Transverse colon (tissue), 4 donors: ENCODE measurements at regions of chr15 and their contacts with region 1.

Region 1: DNA sequence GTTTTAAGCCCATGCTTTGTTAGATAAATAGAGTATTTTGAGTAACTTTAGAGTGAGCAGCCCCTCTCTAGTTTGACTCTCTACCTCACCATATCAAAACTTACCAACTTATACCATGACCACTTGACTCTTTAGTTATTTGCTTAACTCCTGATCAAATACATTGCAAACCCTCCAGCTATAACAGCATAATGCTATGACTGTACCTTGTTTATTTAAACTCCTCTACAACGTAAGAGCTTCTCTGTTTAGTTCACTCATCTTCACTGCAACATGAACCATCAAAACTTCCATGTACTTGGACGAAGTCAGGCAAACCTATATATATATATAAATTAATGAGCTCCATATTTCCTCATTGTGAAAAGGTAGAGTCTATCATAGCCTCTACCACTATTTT is 218.2 kb downstream of the DPH6 start:
- DNase-seq: no peak
- H3K4me3 ChIP-seq: no peak overlapping the region
- H3K27ac ChIP-seq: no peak overlapping the region
- H3K4me1 ChIP-seq: peaks cover 0 to 17% (median 5%) of the 10 kb centered on the region in 4 donors
- H3K27me3 ChIP-seq: no peaks in the 10 kb centered on the region
- CTCF ChIP-seq: no peak
- EP300 ChIP-seq: no peak
- POLR2A ChIP-seq: no peak

Region 2: DNA sequence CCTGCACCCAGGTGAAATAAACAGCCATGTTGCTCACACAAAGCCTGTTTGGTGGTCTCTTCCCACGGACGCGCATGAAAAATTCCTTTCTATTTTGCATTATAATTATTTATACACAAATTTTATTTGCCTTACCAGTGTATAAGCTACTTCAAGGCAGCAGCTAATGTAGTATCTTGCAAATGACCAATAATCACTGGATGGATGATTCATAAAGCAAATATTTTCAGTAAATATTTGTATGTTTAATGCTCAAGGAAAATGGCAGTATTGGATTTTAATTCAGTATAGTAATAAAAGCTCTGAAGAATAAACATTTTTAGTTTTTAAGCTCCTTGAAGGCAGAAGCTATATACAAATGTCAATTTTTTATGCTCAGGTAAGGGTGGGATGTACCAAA is 84.0 kb before region 1 on chr15:
- in situ Hi-C with region 1: no loop called
- intact Hi-C with region 1: no loop called
- DNase-seq: no peak
- H3K4me3 ChIP-seq: no peak overlapping the region
- H3K27ac ChIP-seq: no peak overlapping the region
- H3K4me1 ChIP-seq: no peaks in the 10 kb centered on the region
- H3K27me3 ChIP-seq: no peaks in the 10 kb centered on the region
- CTCF ChIP-seq: no peak
- EP300 ChIP-seq: no peak
- POLR2A ChIP-seq: no peak

Region 3: DNA sequence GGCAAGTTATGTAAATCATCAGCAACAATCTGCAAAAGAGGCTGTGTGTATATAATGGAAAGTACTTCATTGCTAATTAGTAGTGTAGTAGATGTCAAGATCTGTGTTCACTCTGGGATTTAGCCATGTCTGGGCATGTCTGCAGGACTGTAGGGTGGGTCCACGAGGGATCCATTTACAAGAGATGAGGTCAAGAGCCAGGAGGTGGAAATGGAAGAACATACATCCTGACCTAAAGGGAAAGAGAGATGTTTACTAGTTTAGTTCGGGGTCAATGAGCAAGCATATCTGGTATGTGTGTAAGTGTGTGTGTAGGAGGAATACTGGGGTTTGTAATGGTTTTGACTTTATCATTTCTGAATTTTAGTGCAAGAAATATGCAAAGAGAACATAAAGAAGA is 71.2 kb before region 1 on chr15:
- in situ Hi-C with region 1: no loop called
- intact Hi-C with region 1: no loop called
- DNase-seq: no peak
- H3K4me3 ChIP-seq: no peak overlapping the region
- H3K27ac ChIP-seq: no peak overlapping the region
- H3K4me1 ChIP-seq: no peaks in the 10 kb centered on the region
- H3K27me3 ChIP-seq: no peaks in the 10 kb centered on the region
- CTCF ChIP-seq: no peak
- EP300 ChIP-seq: no peak
- POLR2A ChIP-seq: no peak

Region 4: DNA sequence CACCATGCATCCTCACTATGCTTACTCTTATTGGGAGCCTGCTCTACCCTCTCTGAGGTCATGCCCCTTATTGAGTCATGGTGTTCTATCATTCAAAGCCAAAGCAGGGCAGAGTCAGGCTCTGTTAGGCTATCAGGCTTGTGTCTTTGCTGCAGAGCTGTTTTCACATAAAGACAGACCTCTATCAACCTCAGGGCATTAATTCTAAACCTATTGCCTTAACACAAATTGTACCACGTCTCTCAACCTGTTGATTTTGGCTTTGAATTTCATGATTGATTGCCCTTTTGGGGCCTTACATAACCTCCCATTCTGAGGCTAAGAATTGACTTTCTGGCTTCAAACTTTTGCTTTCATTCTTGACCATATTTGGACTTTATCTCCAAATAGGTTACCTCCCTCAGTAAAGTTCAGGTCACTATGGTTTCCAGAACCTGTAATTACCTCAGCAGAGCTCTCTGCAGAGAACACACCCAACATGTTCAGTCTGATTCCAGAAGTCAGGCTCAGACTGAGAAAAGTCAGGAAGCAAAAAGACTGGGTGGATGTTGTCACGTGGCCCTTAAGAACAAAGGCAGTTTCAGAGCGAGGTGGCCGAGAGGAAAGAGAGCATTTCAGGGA is 21.3 kb before region 1 on chr15:
- in situ Hi-C with region 1: no loop called
- intact Hi-C with region 1: loop called (anchors 2 kb)
- DNase-seq: peak; percentile 54
- H3K4me3 ChIP-seq: no peak overlapping the region
- H3K27ac ChIP-seq: peak overlapping the region; percentile 75 to 88 (median 81)
- H3K4me1 ChIP-seq: peaks cover 11 to 61% (median 38%) of the 10 kb centered on the region in 4 donors
- H3K27me3 ChIP-seq: no peaks in the 10 kb centered on the region
- CTCF ChIP-seq: no peak
- EP300 ChIP-seq: no peak
- POLR2A ChIP-seq: no peak